GM12878 (cell line): ENCODE measurements at regions of chr5 and their contacts with region 1.

Region 1: GRCh38 chr5:76303921-76304320 is 99.2 kb upstream of the IQGAP2 start:
- DNase-seq: peak; percentile 34
- ATAC-seq: peak; percentile 90
- H3K4me3 ChIP-seq: no peak overlapping the region
- H3K27ac ChIP-seq: no peak overlapping the region
- H3K4me1 ChIP-seq: peaks cover 6% of the 10 kb centered on the region; the same call in 1 of the 2 replicates
- H3K27me3 ChIP-seq: no peaks in the 10 kb centered on the region
- CTCF ChIP-seq: no peak
- EP300 ChIP-seq: peak in 1 of 2 experiments; percentile 17; a peak in 1 of 4 replicates
- POLR2A ChIP-seq: no peak
- RAD21 ChIP-seq: no peak

Region 2: DNA sequence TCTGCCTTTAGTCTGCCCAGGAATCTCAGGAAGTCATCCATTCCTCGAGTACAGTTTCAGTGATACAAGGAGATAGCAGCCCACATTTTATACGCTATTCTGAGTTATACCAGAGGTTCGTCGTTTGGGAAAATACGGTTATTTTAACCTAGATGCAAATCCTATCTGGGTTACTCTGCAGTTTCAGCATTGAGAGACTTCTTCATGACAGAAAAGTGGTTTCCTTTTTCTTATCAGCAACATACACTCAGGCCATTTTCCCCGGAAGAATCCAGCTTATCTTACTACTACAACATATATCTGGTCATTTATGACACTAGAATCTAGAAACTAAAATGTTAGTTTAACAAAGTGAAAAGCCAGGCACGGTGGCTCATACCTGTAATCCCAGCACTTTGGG is 15.8 kb after region 1 on chr5:
- CTCF ChIA-PET with region 1: interaction called, 11 read pairs
- POLR2A ChIA-PET with region 1: no interaction called
- RAD21 ChIA-PET with region 1: no interaction called
- SMC1A ChIA-PET with region 1: no interaction called
- in situ Hi-C with region 1: no loop called
- intact Hi-C with region 1: no loop called
- DNase-seq: no peak
- ATAC-seq: no peak
- H3K4me3 ChIP-seq: no peak overlapping the region
- H3K27ac ChIP-seq: no peak overlapping the region
- H3K4me1 ChIP-seq: no peaks in the 10 kb centered on the region
- H3K27me3 ChIP-seq: no peaks in the 10 kb centered on the region; a peak in 1 of 4 replicates
- CTCF ChIP-seq: no peak
- EP300 ChIP-seq: no peak
- POLR2A ChIP-seq: no peak
- RAD21 ChIP-seq: no peak

Region 3: GRCh38 chr5:76331126-76331525 is 27.2 kb after region 1 on chr5:
- CTCF ChIA-PET with region 1: interaction called, 11 read pairs
- POLR2A ChIA-PET with region 1: interaction called, 4 read pairs
- RAD21 ChIA-PET with region 1: interaction called, 3 read pairs
- SMC1A ChIA-PET with region 1: interaction called, 4 read pairs
- in situ Hi-C with region 1: no loop called
- intact Hi-C with region 1: no loop called
- DNase-seq: no peak
- ATAC-seq: peak; percentile 31
- H3K4me3 ChIP-seq: no peak overlapping the region
- H3K27ac ChIP-seq: no peak overlapping the region
- H3K4me1 ChIP-seq: no peaks in the 10 kb centered on the region
- H3K27me3 ChIP-seq: no peaks in the 10 kb centered on the region
- CTCF ChIP-seq: no peak
- EP300 ChIP-seq: no peak
- POLR2A ChIP-seq: no peak
- RAD21 ChIP-seq: no peak